CD4-positive, alpha-beta memory T cell (primary cell): ENCODE measurements at regions of chr10 and their contacts with region 1.

Region 1: GRCh38 chr10:21495752-21496342 is 29.6 kb downstream of the SKIDA1 start:
- DNase-seq: peak; percentile 73 to 92 (median 86)
- H3K4me3 ChIP-seq: peak overlapping the region; percentile 17 to 66
- H3K4me3 Mint-ChIP-seq: peak overlapping the region; percentile 82 to 93 (median 90)
- H3K27ac ChIP-seq: no peak overlapping the region
- H3K27ac Mint-ChIP-seq: peak overlapping the region in 1 of 7 donors; percentile 67
- H3K4me1 ChIP-seq: peaks cover 34% of the 10 kb centered on the region
- H3K4me1 Mint-ChIP-seq: peaks cover 12 to 36% (median 17%) of the 10 kb centered on the region in 4 donors
- H3K27me3 ChIP-seq: peaks cover 60% of the 10 kb centered on the region
- H3K27me3 Mint-ChIP-seq: peaks cover 42 to 51% of the 10 kb centered on the region in 2 donors

Region 2: DNA sequence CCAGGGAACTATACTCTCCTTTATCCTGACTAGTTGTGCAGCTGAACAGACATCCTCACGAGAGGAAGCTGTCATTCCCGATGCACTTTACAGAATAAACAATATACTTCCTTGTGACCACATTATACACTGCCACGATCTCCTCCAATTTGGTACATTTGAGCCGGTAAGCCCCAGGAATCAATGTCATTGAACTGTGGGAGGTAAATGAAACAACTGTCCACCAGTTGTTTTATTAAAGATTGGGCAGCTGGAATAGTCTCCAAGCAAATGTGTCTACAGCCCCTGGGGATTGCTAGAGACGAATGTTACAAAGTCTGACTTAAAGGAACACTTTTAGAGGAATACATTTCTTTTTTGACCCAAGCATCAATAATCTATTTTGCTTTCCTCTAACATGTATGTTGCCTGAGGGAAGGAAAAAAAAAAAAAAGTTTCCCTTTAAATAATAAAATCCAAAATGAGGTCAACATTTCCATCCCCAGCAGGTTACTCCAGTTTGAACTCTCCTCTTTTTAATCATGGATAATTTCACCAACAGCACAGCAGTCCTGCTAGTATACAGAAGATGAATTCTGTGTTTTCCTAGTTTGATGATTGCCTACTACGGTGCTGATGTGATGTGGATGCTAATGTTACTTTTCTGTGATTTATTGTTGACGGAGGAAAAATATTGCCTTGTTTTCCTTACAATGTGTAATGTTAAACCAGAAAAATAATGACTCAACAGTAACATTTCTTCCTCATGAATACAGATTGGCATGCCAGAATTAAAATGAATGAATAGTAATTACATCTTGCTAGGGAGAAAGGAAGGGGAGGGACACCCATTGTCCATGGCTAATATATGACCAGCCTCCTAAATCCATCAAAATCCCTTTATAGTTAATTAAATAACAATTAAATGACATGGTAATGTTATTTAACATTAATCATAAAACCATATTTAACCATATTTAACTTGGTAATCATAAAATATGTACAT is 959.7 kb before region 1 on chr10:
- CTCF ChIA-PET with region 1: no interaction called
- POLR2A ChIA-PET with region 1: no interaction called
- intact Hi-C with region 1: no loop called
- DNase-seq: no peak
- H3K4me3 ChIP-seq: no peak overlapping the region
- H3K4me3 Mint-ChIP-seq: no peak overlapping the region
- H3K27ac ChIP-seq: no peak overlapping the region
- H3K27ac Mint-ChIP-seq: no peak overlapping the region
- H3K4me1 ChIP-seq: no peaks in the 10 kb centered on the region
- H3K4me1 Mint-ChIP-seq: no peaks in the 10 kb centered on the region
- H3K27me3 ChIP-seq: no peaks in the 10 kb centered on the region
- H3K27me3 Mint-ChIP-seq: no peaks in the 10 kb centered on the region

Region 3: DNA sequence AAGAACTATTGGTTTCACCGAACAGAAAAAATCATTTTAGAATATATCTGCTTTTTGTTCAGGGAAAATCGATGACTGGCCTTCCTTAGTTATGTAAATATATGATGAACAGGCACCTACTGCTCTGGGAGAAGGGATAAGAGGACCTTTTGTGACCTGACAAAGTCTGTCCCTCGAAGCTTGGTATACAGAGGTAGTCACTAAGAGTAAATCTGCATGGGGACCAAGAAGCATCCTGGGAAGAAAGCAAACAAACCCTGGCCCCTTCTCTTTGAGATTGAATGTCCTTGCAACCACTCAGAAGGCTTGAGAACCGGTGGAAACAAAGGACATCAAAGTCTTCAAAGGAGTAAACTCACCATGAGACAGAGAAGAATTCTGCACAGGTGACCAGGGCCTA is 22.7 kb before region 1 on chr10:
- CTCF ChIA-PET with region 1: no interaction called
- POLR2A ChIA-PET with region 1: no interaction called
- intact Hi-C with region 1: no loop called
- DNase-seq: no peak
- H3K4me3 ChIP-seq: no peak overlapping the region
- H3K4me3 Mint-ChIP-seq: no peak overlapping the region
- H3K27ac ChIP-seq: no peak overlapping the region
- H3K27ac Mint-ChIP-seq: no peak overlapping the region
- H3K4me1 ChIP-seq: no peaks in the 10 kb centered on the region
- H3K4me1 Mint-ChIP-seq: no peaks in the 10 kb centered on the region
- H3K27me3 ChIP-seq: no peaks in the 10 kb centered on the region
- H3K27me3 Mint-ChIP-seq: peaks cover 5 to 7% of the 10 kb centered on the region in 2 donors

Region 4: DNA sequence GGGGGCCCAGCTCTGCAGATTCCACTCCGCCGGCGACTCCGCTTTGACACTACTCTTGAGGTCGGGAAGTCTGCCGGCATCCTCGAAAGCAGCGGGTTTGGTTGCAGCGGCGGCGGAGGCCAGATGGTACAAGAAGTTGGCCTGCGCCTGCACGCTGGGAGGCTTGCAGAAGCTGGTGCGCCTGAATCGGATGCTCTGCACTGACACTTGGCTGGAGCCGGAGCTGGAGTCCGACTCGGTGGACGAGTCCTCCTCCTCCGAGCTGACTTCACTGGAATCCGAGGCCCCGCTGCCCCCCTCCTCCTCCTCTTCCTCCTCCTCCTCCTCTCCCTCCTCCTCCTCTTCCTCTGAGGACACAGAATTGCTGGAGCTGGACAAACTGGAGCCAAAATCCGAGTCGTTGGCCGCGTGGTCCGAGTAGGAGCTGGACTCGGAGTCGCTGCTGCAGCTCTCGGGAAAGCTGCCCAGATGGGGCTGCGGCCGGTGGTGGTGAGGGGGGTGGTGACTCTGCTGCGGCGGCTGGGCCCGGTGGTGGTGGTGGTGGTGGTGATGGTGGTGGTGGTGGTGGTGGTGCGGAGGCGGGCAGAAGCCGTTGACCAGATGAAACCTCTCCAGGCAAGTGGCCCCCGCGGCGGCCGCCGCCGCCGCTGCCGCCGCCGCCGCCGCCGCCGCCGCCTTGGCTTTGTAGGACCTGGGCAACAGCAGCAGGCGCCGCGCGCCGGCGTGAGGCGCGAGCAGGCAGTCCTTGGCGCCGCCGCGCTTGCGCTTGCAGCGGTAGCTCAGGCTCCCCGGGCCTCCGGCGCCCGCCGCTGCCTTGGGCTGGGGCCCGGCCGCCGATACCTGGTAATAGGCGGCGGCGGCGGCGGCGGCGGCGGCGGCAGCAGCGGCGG is 20.6 kb after region 1 on chr10:
- CTCF ChIA-PET with region 1: interaction called, 10 read pairs
- POLR2A ChIA-PET with region 1: interaction called, 17 read pairs
- intact Hi-C with region 1: loop called (anchors 1 kb)
- DNase-seq: peak; percentile 46 to 64 (median 55)
- H3K4me3 ChIP-seq: peak overlapping the region in 1 of 2 donors; percentile 39
- H3K4me3 Mint-ChIP-seq: peak overlapping the region; percentile 68 to 89 (median 76)
- H3K27ac ChIP-seq: no peak overlapping the region
- H3K27ac Mint-ChIP-seq: peak overlapping the region in 1 of 7 donors; percentile 77
- H3K4me1 ChIP-seq: peaks cover 37% of the 10 kb centered on the region
- H3K4me1 Mint-ChIP-seq: peaks cover 23 to 50% (median 32%) of the 10 kb centered on the region in 4 donors
- H3K27me3 ChIP-seq: peaks cover 76% of the 10 kb centered on the region
- H3K27me3 Mint-ChIP-seq: peaks cover 63 to 76% of the 10 kb centered on the region in 2 donors

Region 5: GRCh38 chr10:21533467-21534279 is 37.8 kb after region 1 on chr10 and contains the start of gene MLLT10:
- CTCF ChIA-PET with region 1: interaction called, 13 read pairs
- POLR2A ChIA-PET with region 1: interaction called, 57 read pairs
- intact Hi-C with region 1: loop called (anchors 2 kb)
- DNase-seq: peak; percentile 93 to 96 (median 95)
- H3K4me3 ChIP-seq: peak within 1 kb of the TSS; percentile 69 to 88
- H3K4me3 Mint-ChIP-seq: peak within 1 kb of the TSS; percentile 92 to 99 (median 95)
- H3K27ac ChIP-seq: peak within 1 kb of the TSS; percentile 63
- H3K27ac Mint-ChIP-seq: peak within 1 kb of the TSS; percentile 85 to 98 (median 95)
- H3K4me1 ChIP-seq: peaks cover 19% of the 10 kb centered on the region
- H3K4me1 Mint-ChIP-seq: peaks cover 10 to 33% (median 21%) of the 10 kb centered on the region in 4 donors
- H3K27me3 ChIP-seq: no peaks in the 10 kb centered on the region
- H3K27me3 Mint-ChIP-seq: no peaks in the 10 kb centered on the region
- total RNA-seq, gene MLLT10: 64.6 to 73.4 TPM

Region 6: DNA sequence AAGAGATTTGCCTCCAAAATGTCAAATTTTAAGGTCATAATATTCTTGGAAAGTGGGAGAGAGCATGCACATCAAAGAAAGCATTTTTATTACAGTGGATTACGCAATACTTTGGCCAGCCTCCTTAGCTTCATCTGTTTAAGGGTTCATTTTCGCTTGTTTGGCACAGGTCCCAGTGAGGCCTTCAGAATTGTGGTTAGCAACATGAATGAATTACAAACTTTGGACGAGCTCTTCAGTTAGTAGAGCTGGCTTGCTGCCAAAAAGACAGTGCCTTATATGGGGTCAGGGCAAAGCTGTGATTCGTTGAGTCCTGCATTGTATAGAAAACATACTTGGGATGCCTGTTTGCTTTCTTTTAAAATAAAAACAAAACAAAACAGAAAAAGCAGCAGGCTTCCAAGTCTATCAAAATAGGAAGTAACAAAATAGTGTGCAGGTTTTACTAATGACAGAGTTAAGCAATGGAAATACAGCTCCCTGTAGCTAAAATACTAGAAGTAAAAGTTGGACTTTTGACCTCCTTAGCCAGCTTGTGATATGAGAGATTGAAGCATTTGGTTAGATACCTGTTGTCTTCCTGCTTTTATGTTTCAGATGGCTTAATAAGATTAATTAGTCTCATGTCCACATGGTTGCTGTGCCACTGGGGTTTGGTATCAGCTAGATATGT is 229.0 kb after region 1 on chr10:
- CTCF ChIA-PET with region 1: interaction called, 32 read pairs
- POLR2A ChIA-PET with region 1: interaction called, 5 read pairs
- intact Hi-C with region 1: no loop called
- DNase-seq: peak; percentile 40 to 55 (median 48)
- H3K4me3 ChIP-seq: no peak overlapping the region
- H3K4me3 Mint-ChIP-seq: peak overlapping the region in 2 of 8 donors; percentile 12 to 19
- H3K27ac ChIP-seq: no peak overlapping the region
- H3K27ac Mint-ChIP-seq: peak overlapping the region in 3 of 7 donors; percentile 10 to 43 (median 25)
- H3K4me1 ChIP-seq: peaks cover 26% of the 10 kb centered on the region
- H3K4me1 Mint-ChIP-seq: peaks cover 25 to 43% (median 34%) of the 10 kb centered on the region in 4 donors
- H3K27me3 ChIP-seq: no peaks in the 10 kb centered on the region
- H3K27me3 Mint-ChIP-seq: no peaks in the 10 kb centered on the region

Region 7: DNA sequence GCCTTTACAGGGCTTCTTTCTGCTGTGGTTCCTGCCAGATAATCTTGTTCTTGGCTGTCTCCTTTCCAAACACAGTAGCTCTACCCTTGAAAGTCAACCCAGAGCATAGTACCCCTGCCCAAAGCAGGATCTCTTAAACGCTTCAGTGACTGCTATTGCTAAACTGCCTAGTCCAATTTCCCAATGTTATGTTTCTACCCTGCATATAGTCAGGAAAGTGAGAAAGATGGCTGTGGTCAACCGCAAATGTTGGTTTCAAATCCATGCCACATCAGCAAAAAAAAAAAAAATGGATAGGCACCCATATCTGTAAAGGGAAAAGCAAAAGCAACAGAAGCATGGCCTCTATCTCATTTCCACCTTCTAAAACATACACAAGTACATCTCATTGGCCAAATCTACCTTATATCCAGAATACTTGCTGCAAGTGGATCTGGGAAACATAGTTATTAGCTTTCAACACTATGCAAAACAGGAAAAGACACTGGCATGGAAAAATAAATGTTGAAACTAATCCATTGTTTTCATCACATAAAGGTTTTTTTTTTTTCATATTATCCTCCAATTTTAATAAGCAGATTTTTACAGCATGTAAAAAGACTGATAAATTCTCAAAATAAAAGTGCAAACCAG is 447.9 kb after region 1 on chr10:
- CTCF ChIA-PET with region 1: interaction called, 14 read pairs
- POLR2A ChIA-PET with region 1: no interaction called
- intact Hi-C with region 1: no loop called
- DNase-seq: no peak
- H3K4me3 ChIP-seq: no peak overlapping the region
- H3K4me3 Mint-ChIP-seq: no peak overlapping the region
- H3K27ac ChIP-seq: no peak overlapping the region
- H3K27ac Mint-ChIP-seq: no peak overlapping the region
- H3K4me1 ChIP-seq: no peaks in the 10 kb centered on the region
- H3K4me1 Mint-ChIP-seq: peaks cover 10 to 36% (median 24%) of the 10 kb centered on the region in 4 donors
- H3K27me3 ChIP-seq: no peaks in the 10 kb centered on the region
- H3K27me3 Mint-ChIP-seq: no peaks in the 10 kb centered on the region

Region 8: GRCh38 chr10:21989453-21990154 is 493.8 kb after region 1 on chr10:
- CTCF ChIA-PET with region 1: interaction called, 24 read pairs
- POLR2A ChIA-PET with region 1: no interaction called
- intact Hi-C with region 1: loop called (anchors 2 kb)
- DNase-seq: peak in 4 of 5 donors; percentile 13 to 33 (median 24)
- H3K4me3 ChIP-seq: no peak overlapping the region
- H3K4me3 Mint-ChIP-seq: no peak overlapping the region
- H3K27ac ChIP-seq: no peak overlapping the region
- H3K27ac Mint-ChIP-seq: peak overlapping the region in 2 of 7 donors; percentile 52 to 94
- H3K4me1 ChIP-seq: peaks cover 5% of the 10 kb centered on the region
- H3K4me1 Mint-ChIP-seq: peaks cover 6 to 12% (median 10%) of the 10 kb centered on the region in 4 donors
- H3K27me3 ChIP-seq: no peaks in the 10 kb centered on the region
- H3K27me3 Mint-ChIP-seq: no peaks in the 10 kb centered on the region

Region 9: GRCh38 chr10:22097696-22098095 is 601.8 kb after region 1 on chr10:
- CTCF ChIA-PET with region 1: no interaction called
- POLR2A ChIA-PET with region 1: no interaction called
- intact Hi-C with region 1: no loop called
- DNase-seq: no peak
- H3K4me3 ChIP-seq: no peak overlapping the region
- H3K4me3 Mint-ChIP-seq: no peak overlapping the region
- H3K27ac ChIP-seq: no peak overlapping the region
- H3K27ac Mint-ChIP-seq: no peak overlapping the region
- H3K4me1 ChIP-seq: no peaks in the 10 kb centered on the region
- H3K4me1 Mint-ChIP-seq: no peaks in the 10 kb centered on the region
- H3K27me3 ChIP-seq: no peaks in the 10 kb centered on the region
- H3K27me3 Mint-ChIP-seq: peaks cover 0 to 2% of the 10 kb centered on the region in 2 donors

Region 10: GRCh38 chr10:22316285-22317120 is 820.7 kb after region 1 on chr10 and contains the start of gene COMMD3:
- CTCF ChIA-PET with region 1: no interaction called
- POLR2A ChIA-PET with region 1: interaction called, 3 read pairs
- intact Hi-C with region 1: loop called (anchors 5 kb)
- DNase-seq: peak; percentile 78 to 86 (median 82)
- H3K4me3 ChIP-seq: peak within 1 kb of the TSS; percentile 77 to 95
- H3K4me3 Mint-ChIP-seq: peak within 1 kb of the TSS; percentile 94 to 99 (median 98)
- H3K27ac ChIP-seq: peak within 1 kb of the TSS; percentile 71
- H3K27ac Mint-ChIP-seq: peak within 1 kb of the TSS; percentile 89 to 98 (median 98)
- H3K4me1 ChIP-seq: peaks cover 37% of the 10 kb centered on the region
- H3K4me1 Mint-ChIP-seq: peaks cover 22 to 50% (median 29%) of the 10 kb centered on the region in 4 donors
- H3K27me3 ChIP-seq: no peaks in the 10 kb centered on the region
- H3K27me3 Mint-ChIP-seq: peaks cover 3 to 4% of the 10 kb centered on the region in 2 donors
- total RNA-seq, gene COMMD3: 67.9 to 68.5 TPM